A549 (cell line): ENCODE measurements at regions of chr2 and their contacts with region 1.

Region 1: DNA sequence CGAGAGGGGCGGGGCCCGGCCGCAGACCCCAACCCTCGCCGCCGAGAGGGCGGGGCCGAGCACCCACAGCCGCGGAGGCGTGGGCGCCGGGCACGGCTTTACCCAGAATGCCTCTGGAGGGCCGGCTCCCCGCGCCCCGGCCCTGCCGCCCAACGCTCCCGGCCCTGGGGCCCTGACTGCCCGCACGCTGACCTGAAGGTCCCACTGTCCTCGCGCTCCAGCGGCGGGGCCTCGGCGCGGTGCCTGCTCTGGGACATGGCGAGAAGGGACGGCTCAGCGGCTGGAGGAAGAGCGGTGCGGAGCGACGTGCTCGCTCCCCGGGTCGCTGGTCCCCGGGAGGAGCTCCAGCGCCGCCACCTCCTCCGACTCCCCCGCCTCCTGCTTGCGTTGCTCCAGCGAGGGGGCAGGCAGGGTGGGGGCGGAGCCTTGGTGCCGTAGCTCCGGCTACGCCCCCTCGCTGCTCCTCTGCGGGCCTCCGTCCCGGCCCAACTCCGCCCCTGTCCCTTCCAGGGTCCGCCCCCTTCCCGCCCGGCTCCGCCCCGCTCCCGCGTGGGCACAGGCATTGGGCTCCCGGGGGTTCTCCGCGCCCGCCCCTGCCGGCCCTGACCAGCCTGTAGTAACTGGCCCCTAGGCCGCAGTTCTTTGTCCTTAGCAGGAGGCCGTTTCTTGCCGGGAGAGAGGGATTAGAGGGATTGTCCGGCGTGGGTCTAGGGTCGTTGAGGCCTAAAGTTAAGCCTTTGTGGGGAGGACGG is at the starts of genes PJVK and PRKRA:
- DNase-seq: peak; percentile 72 to 98
- ATAC-seq: peak; percentile 90 to 97
- H3K4me3 ChIP-seq: peak within 1 kb of the TSS; percentile 61
- H3K27ac ChIP-seq: peak within 1 kb of the TSS; percentile 92 to 97
- H3K4me1 ChIP-seq: peaks cover 11% of the 10 kb centered on the region; the same call in 2 of the 3 replicates
- CTCF ChIP-seq: no peak
- EP300 ChIP-seq: no peak
- POLR2A ChIP-seq: peak; percentile 94
- RAD21 ChIP-seq: no peak
- polyA plus RNA-seq, gene PJVK: 7.9 and 10.1 TPM in 2 replicates
- polyA plus RNA-seq, gene PRKRA: 56.7 and 63.4 TPM in 2 replicates

Region 2: DNA sequence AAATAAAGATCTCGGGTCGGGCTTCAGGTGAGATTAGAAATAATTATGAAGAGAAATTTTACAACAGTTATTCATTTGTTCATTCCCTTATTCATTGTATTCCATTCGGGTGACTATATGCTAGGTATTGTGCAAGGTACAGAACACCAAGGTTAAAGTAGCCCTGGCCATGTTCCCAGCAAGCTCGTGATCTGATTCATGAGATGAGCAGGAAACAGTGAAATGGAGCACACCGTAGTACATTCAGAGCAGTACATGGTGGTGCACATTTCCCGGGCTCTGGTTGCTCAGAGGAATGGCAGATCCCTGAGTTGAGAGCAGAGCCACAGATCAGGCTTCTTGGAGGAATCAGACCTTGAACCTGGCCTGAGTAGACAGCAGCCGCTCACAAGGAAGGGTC is 87.7 kb before region 1 on chr2:
- CTCF ChIA-PET with region 1: no interaction called
- POLR2A ChIA-PET with region 1: no interaction called
- DNase-seq: peak; percentile 7 to 43
- ATAC-seq: peak; percentile 86 to 93
- H3K4me3 ChIP-seq: no peak overlapping the region
- H3K27ac ChIP-seq: peak overlapping the region; percentile 28 to 45; a peak in 2 of 6 replicates
- H3K4me1 ChIP-seq: peaks cover 5% of the 10 kb centered on the region; the same call in 2 of the 3 replicates
- CTCF ChIP-seq: no peak
- EP300 ChIP-seq: no peak
- POLR2A ChIP-seq: no peak
- RAD21 ChIP-seq: no peak

Region 3: DNA sequence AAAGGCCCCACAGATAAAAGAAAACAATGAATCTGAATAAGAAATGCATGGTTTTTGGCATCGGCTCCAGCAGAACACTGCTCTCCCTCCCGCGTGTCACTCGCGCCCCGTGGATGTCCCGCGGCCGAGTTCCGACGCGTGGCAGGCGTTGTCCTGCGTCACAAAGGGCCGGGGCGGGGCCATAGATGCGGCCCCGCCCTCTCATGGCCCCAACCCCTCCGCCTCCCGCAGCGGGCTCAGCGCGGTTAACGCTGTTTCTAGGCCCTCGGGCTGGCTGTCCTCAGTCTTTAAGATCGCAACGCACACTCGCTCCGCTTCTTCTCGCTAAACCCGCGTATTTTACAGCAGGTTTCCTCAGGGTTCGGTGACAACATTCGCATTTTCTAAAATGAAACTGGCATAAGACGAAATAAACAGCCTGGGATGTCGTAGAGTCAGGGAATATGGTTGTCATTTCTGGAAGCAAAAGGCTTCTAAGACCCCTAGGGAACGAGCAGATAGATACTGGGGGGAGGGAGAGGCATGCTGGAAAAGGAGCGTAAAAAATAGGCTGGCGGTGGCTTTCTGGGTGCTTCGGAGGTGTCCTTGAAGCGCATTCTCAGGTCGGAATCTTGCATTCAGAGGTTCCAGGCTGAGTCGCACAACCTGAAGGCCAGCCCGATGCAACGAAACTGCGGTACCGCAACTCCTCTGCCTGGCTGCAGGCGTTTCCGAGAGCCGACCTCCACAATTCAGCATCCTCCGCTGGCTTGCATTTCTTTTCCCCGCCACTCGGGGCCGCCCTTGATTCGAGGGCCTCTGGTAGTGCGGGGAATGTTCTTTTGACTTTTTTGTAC is 27.7 kb after region 1 on chr2 and contains the start of gene FKBP7:
- CTCF ChIA-PET with region 1: interaction called, 4 read pairs
- POLR2A ChIA-PET with region 1: interaction called, 35 read pairs
- DNase-seq: peak; percentile 71 to 84
- ATAC-seq: peak; percentile 72 to 79
- H3K4me3 ChIP-seq: peak within 1 kb of the TSS; percentile 68
- H3K27ac ChIP-seq: peak within 1 kb of the TSS; percentile 82 to 92
- H3K4me1 ChIP-seq: peaks cover 42% of the 10 kb centered on the region
- CTCF ChIP-seq: peak; percentile 58
- EP300 ChIP-seq: no peak
- POLR2A ChIP-seq: peak; percentile 66
- RAD21 ChIP-seq: peak; percentile 65 to 75
- polyA plus RNA-seq, gene FKBP7: 21.4 and 23.7 TPM in 2 replicates

Region 4: GRCh38 chr2:178574777-178575176 is 123.8 kb after region 1 on chr2:
- CTCF ChIA-PET with region 1: no interaction called
- POLR2A ChIA-PET with region 1: no interaction called
- DNase-seq: no peak
- ATAC-seq: no peak
- H3K4me3 ChIP-seq: no peak overlapping the region
- H3K27ac ChIP-seq: no peak overlapping the region
- H3K4me1 ChIP-seq: no peaks in the 10 kb centered on the region
- CTCF ChIP-seq: no peak
- EP300 ChIP-seq: no peak
- POLR2A ChIP-seq: no peak
- RAD21 ChIP-seq: no peak

Region 5: GRCh38 chr2:178700922-178701342 is 250.0 kb after region 1 on chr2:
- CTCF ChIA-PET with region 1: no interaction called
- POLR2A ChIA-PET with region 1: interaction called, 11 read pairs
- DNase-seq: peak; percentile 2 to 48
- ATAC-seq: peak in 1 of 2 experiments; percentile 43; a peak in 1 of 6 replicates
- H3K4me3 ChIP-seq: no peak overlapping the region
- H3K27ac ChIP-seq: no peak overlapping the region
- H3K4me1 ChIP-seq: no peaks in the 10 kb centered on the region
- CTCF ChIP-seq: peak; percentile 76
- EP300 ChIP-seq: no peak
- POLR2A ChIP-seq: no peak
- RAD21 ChIP-seq: peak; percentile 19 to 43; a peak in 3 of 5 replicates